B cell (primary cell): ENCODE measurements at regions of chr15 and their contacts with region 1.

Region 1: GRCh38 chr15:82977076-82977475 is 8.9 kb upstream of the RAMAC start:
- DNase-seq: no peak
- ATAC-seq: no peak
- H3K4me3 ChIP-seq: no peak overlapping the region
- H3K4me3 Mint-ChIP-seq: no peak overlapping the region
- H3K27ac ChIP-seq: no peak overlapping the region
- H3K27ac Mint-ChIP-seq: no peak overlapping the region
- H3K4me1 ChIP-seq: no peaks in the 10 kb centered on the region
- H3K4me1 Mint-ChIP-seq: no peaks in the 10 kb centered on the region
- H3K27me3 ChIP-seq: no peaks in the 10 kb centered on the region
- H3K27me3 Mint-ChIP-seq: no peaks in the 10 kb centered on the region
- CTCF ChIP-seq: no peak

Region 2: GRCh38 chr15:82809404-82810060 is 167.5 kb before region 1 on chr15 and contains the start of gene WHAMM:
- CTCF ChIA-PET with region 1: no interaction called
- POLR2A ChIA-PET with region 1: no interaction called
- intact Hi-C with region 1: no loop called
- DNase-seq: peak; percentile 97
- ATAC-seq: peak; percentile 89
- H3K4me3 ChIP-seq: peak within 1 kb of the TSS; percentile 82 to 96 (median 86)
- H3K4me3 Mint-ChIP-seq: peak within 1 kb of the TSS; percentile 86
- H3K27ac ChIP-seq: peak within 1 kb of the TSS; percentile 91 to 99
- H3K27ac Mint-ChIP-seq: peak within 1 kb of the TSS; percentile 95
- H3K4me1 ChIP-seq: peaks cover 31 to 41% of the 10 kb centered on the region in 2 donors
- H3K4me1 Mint-ChIP-seq: peaks cover 54% of the 10 kb centered on the region
- H3K27me3 ChIP-seq: no peaks in the 10 kb centered on the region
- H3K27me3 Mint-ChIP-seq: no peaks in the 10 kb centered on the region
- CTCF ChIP-seq: no peak
- total RNA-seq, gene WHAMM: 29.9 and 31.3 TPM in 2 replicates

Region 3: GRCh38 chr15:82952158-82953081 is 24.7 kb before region 1 on chr15 and contains the start of gene HOMER2:
- CTCF ChIA-PET with region 1: no interaction called
- POLR2A ChIA-PET with region 1: interaction called, 12 read pairs
- intact Hi-C with region 1: no loop called
- DNase-seq: peak; percentile 41
- ATAC-seq: peak; percentile 78
- H3K4me3 ChIP-seq: peak within 1 kb of the TSS in 4 of 5 experiments; percentile 26 to 63 (median 44)
- H3K4me3 Mint-ChIP-seq: peak within 1 kb of the TSS; percentile 76
- H3K27ac ChIP-seq: no peak within 1 kb of the TSS
- H3K27ac Mint-ChIP-seq: no peak within 1 kb of the TSS
- H3K4me1 ChIP-seq: peaks cover 19 to 27% of the 10 kb centered on the region in 2 donors
- H3K4me1 Mint-ChIP-seq: peaks cover 9% of the 10 kb centered on the region
- H3K27me3 ChIP-seq: peaks cover 0 to 5% (median 5%) of the 10 kb centered on the region in 4 experiments
- H3K27me3 Mint-ChIP-seq: peaks cover 15% of the 10 kb centered on the region
- CTCF ChIP-seq: no peak
- total RNA-seq, gene HOMER2: 17.1 and 19.5 TPM in 2 replicates